B cell (primary cell): ENCODE measurements at regions of chr9 and their contacts with region 1.

Region 1: GRCh38 chr9:76458903-76459690 is at the start of gene GCNT1:
- DNase-seq: peak; percentile 95
- ATAC-seq: peak; percentile 93
- H3K4me3 ChIP-seq: peak within 1 kb of the TSS; percentile 73 to 98 (median 93)
- H3K4me3 Mint-ChIP-seq: peak within 1 kb of the TSS; percentile 90
- H3K27ac ChIP-seq: peak within 1 kb of the TSS; percentile 52 to 65
- H3K27ac Mint-ChIP-seq: peak within 1 kb of the TSS; percentile 71
- H3K4me1 ChIP-seq: peaks cover 51 to 54% of the 10 kb centered on the region in 2 donors
- H3K4me1 Mint-ChIP-seq: peaks cover 51% of the 10 kb centered on the region
- H3K27me3 ChIP-seq: no peaks in the 10 kb centered on the region
- H3K27me3 Mint-ChIP-seq: peaks cover 7% of the 10 kb centered on the region
- CTCF ChIP-seq: peak; percentile 52
- total RNA-seq, gene GCNT1: 9.1 and 12.0 TPM in 2 replicates

Region 2: DNA sequence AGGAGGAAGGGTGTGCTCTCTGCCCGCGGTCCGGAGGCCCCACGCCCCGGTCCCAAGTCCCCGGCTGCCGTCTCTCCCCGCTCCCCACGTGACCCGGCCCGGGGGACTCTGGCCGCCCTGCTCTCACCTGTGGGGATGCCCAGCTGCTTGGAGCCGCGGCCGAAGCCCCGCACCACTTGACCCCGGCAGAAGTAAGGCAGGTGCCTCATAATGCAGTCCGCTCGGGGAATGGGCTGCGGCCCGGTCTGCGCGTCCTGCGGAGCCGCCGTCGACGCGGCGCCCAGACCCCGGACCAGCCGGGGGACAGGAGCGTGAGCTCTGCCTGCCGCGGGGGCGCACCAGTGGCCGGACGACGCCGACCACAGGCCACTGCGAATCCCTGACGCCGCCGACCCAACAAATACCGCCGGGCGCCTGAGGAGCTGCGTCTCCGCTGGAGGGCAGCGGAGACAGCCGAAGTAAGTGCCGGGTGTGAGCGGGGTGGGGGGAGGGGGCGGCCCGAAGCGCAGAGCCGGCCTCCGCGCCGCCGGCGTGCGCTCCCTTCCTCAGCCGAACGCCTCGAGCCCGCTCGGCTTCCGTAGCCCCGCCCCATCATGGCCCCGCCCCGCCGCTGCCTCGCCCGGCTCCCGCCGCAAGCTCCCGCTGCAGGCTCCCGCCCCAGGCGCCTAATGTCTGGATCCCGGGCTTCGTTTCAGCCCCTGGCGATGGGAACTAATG is 65.0 kb before region 1 on chr9 and contains the start of gene RFK:
- CTCF ChIA-PET with region 1: interaction called, 14 read pairs
- POLR2A ChIA-PET with region 1: no interaction called
- intact Hi-C with region 1: loop called (anchors 1 kb)
- DNase-seq: peak; percentile 95
- ATAC-seq: peak; percentile 92
- H3K4me3 ChIP-seq: peak within 1 kb of the TSS; percentile 93 to 98 (median 97)
- H3K4me3 Mint-ChIP-seq: peak within 1 kb of the TSS; percentile 94
- H3K27ac ChIP-seq: peak within 1 kb of the TSS; percentile 78 to 98
- H3K27ac Mint-ChIP-seq: peak within 1 kb of the TSS; percentile 98
- H3K4me1 ChIP-seq: peaks cover 9 to 15% of the 10 kb centered on the region in 2 donors
- H3K4me1 Mint-ChIP-seq: peaks cover 15% of the 10 kb centered on the region
- H3K27me3 ChIP-seq: no peaks in the 10 kb centered on the region
- H3K27me3 Mint-ChIP-seq: no peaks in the 10 kb centered on the region
- CTCF ChIP-seq: peak; percentile 61
- total RNA-seq, gene RFK: 7.3 and 9.0 TPM in 2 replicates

Region 3: DNA sequence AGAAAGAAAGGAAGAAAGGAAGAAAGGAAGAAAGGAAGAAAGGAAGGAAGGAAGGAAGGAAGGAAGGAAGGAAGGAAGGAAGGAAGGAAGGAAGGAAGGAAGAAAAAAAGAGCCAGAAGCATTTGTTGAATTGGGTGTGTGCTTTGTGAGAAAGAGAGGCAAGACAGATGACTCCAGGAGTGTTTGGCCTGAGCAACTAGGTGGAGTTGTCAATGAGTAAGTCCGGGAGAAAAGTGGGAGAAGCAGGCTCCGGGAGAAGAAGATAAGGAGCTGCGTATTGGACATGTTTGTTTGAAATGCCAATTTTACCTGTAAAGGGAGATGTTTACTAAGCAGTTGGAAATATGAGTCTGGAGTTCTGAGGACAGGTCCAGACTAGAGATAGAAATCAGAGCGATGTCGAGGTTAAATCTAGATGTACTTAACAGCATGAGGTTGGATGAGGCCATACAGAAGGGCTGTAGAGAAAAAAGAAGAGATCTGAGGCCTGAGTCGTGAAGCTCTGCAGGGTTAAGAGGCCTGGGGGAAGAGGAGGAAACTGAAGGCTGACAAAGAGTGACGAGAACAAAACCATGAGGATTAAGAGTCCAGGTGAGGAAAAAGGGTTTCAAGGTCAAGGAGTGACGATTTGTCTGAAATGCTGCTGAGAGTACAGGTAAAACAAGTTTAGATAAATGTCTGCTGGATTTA is 15.1 kb before region 1 on chr9:
- CTCF ChIA-PET with region 1: interaction called, 24 read pairs
- POLR2A ChIA-PET with region 1: no interaction called
- intact Hi-C with region 1: no loop called
- DNase-seq: no peak
- ATAC-seq: no peak
- H3K4me3 ChIP-seq: no peak overlapping the region
- H3K4me3 Mint-ChIP-seq: no peak overlapping the region
- H3K27ac ChIP-seq: no peak overlapping the region
- H3K27ac Mint-ChIP-seq: no peak overlapping the region
- H3K4me1 ChIP-seq: peaks cover 3 to 5% of the 10 kb centered on the region in 2 donors
- H3K4me1 Mint-ChIP-seq: peaks cover 2% of the 10 kb centered on the region
- H3K27me3 ChIP-seq: no peaks in the 10 kb centered on the region
- H3K27me3 Mint-ChIP-seq: no peaks in the 10 kb centered on the region
- CTCF ChIP-seq: no peak

Region 4: GRCh38 chr9:76475686-76476085 is 16.6 kb after region 1 on chr9:
- CTCF ChIA-PET with region 1: interaction called, 45 read pairs
- POLR2A ChIA-PET with region 1: interaction called, 11 read pairs
- intact Hi-C with region 1: loop called (anchors 1 kb)
- DNase-seq: no peak
- ATAC-seq: no peak
- H3K4me3 ChIP-seq: no peak overlapping the region
- H3K4me3 Mint-ChIP-seq: peak overlapping the region; percentile 30
- H3K27ac ChIP-seq: no peak overlapping the region
- H3K27ac Mint-ChIP-seq: peak overlapping the region; percentile 3
- H3K4me1 ChIP-seq: peaks cover 58 to 68% of the 10 kb centered on the region in 2 donors
- H3K4me1 Mint-ChIP-seq: peaks cover 65% of the 10 kb centered on the region
- H3K27me3 ChIP-seq: no peaks in the 10 kb centered on the region
- H3K27me3 Mint-ChIP-seq: peaks cover 14% of the 10 kb centered on the region
- CTCF ChIP-seq: no peak

Region 5: GRCh38 chr9:76576344-76576743 is 117.2 kb after region 1 on chr9:
- CTCF ChIA-PET with region 1: no interaction called
- POLR2A ChIA-PET with region 1: no interaction called
- intact Hi-C with region 1: loop called (anchors 2 kb)
- DNase-seq: peak; percentile 44
- ATAC-seq: peak; percentile 83
- H3K4me3 ChIP-seq: peak overlapping the region in 1 of 5 experiments; percentile 27
- H3K4me3 Mint-ChIP-seq: peak overlapping the region; percentile 21
- H3K27ac ChIP-seq: peak overlapping the region in 1 of 2 donors; percentile 14
- H3K27ac Mint-ChIP-seq: peak overlapping the region; percentile 35
- H3K4me1 ChIP-seq: peaks cover 26 to 31% of the 10 kb centered on the region in 2 donors
- H3K4me1 Mint-ChIP-seq: peaks cover 44% of the 10 kb centered on the region
- H3K27me3 ChIP-seq: no peaks in the 10 kb centered on the region
- H3K27me3 Mint-ChIP-seq: peaks cover 14% of the 10 kb centered on the region
- CTCF ChIP-seq: no peak

Region 6: DNA sequence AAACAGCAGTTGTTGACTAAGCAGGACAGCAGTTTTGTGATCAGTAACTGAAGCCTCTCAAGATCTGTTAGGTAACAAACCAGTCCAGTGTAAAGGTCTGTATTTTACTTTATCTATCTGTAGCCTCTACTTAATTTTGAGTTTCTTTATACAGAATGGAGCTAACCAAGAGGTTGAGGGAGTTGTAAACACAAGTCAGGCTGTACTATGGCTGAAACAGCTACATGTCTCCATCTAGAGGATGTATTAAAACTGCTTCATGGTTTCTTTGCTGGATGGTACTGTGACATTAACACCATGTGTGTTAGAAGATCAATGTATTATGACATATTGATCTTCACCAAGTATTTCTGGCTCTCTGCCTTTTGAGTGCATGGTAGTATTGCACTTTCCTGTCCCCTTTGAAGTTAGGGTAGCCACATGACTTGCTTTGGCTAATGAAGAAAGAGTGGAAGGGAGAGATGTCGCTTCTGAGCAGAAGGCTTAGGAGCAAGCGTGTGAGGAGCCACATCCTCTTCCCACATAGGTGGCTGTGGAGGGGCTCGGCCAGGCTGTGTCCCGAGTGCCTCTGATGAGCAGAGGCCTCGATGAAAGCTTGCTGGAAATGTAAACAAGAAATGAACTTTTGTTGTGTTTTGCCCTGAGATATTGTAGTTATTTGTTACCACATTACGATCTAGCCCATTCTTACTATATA is 199.6 kb after region 1 on chr9:
- CTCF ChIA-PET with region 1: interaction called, 151 read pairs
- POLR2A ChIA-PET with region 1: no interaction called
- intact Hi-C with region 1: loop called (anchors 1 kb)
- DNase-seq: peak; percentile 68
- ATAC-seq: peak; percentile 81
- H3K4me3 ChIP-seq: no peak overlapping the region
- H3K4me3 Mint-ChIP-seq: no peak overlapping the region
- H3K27ac ChIP-seq: no peak overlapping the region
- H3K27ac Mint-ChIP-seq: no peak overlapping the region
- H3K4me1 ChIP-seq: peaks cover 17 to 32% of the 10 kb centered on the region in 2 donors
- H3K4me1 Mint-ChIP-seq: peaks cover 34% of the 10 kb centered on the region
- H3K27me3 ChIP-seq: no peaks in the 10 kb centered on the region
- H3K27me3 Mint-ChIP-seq: peaks cover 6% of the 10 kb centered on the region
- CTCF ChIP-seq: peak; percentile 79

Region 7: GRCh38 chr9:76756268-76756640 is 297.2 kb after region 1 on chr9:
- CTCF ChIA-PET with region 1: no interaction called
- POLR2A ChIA-PET with region 1: no interaction called
- intact Hi-C with region 1: loop called (anchors 5 kb)
- DNase-seq: peak; percentile 37
- ATAC-seq: no peak
- H3K4me3 ChIP-seq: peak overlapping the region in 1 of 5 experiments; percentile 28
- H3K4me3 Mint-ChIP-seq: peak overlapping the region; percentile 84
- H3K27ac ChIP-seq: peak overlapping the region; percentile 62 to 68
- H3K27ac Mint-ChIP-seq: peak overlapping the region; percentile 78
- H3K4me1 ChIP-seq: peaks cover 43 to 55% of the 10 kb centered on the region in 2 donors
- H3K4me1 Mint-ChIP-seq: peaks cover 62% of the 10 kb centered on the region
- H3K27me3 ChIP-seq: no peaks in the 10 kb centered on the region
- H3K27me3 Mint-ChIP-seq: peaks cover 4% of the 10 kb centered on the region
- CTCF ChIP-seq: no peak